ENCODE measurements at regions of chr14 and their contacts with region 1.

Region 1: GRCh38 chr14:21103710-21104447 is 3.0 kb downstream of the TMEM253 start:
- DNase-seq: peak; percentile 98
- H3K4me3 ChIP-seq: peak overlapping the region; percentile 64 to 89
- H3K27ac ChIP-seq: peak overlapping the region; percentile 97 to 98
- H3K4me1 ChIP-seq: peaks cover 31% of the 10 kb centered on the region
- H3K27me3 ChIP-seq: no peaks in the 10 kb centered on the region
- CTCF ChIP-seq: peak; percentile 69 to 89 (median 88)
- POLR2A ChIP-seq: peak; percentile 73

Region 2: DNA sequence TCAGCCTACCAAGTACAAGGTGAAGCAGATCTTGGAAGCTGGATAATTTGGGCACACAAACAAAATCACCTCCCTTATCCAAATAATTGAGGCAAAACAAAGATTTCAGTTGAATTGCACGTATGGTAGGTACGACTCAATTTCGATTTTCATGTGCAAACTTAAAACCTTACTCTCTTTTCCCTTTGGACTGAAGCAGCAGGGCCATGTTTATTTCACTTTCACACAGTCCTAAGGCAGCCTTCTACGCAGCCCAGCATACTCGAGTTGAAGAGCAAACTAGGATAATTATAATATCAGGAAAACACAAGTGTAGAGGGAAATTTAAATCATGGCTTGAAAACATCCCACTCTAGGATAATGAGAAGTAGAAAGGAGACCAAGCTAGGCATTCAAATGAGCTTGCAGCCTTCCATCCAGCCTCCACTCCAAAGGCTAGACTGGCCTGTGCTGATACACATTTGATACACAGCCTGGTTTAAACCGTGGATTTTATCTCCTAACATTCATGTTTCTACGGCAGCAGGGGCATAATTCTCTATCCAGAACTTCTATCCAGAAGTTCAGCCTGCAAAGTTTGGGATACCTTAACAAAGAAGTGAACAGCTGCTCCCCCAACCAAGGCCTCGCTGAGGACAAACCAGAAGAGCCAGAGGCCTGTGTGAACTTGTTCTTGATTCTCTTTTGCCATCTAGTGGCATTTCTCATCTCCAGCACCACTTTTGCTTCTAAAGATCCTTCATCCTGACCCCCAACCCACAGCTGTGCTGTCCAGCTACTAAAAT is 64.1 kb before region 1 on chr14:
- intact Hi-C with region 1: no loop called
- DNase-seq: peak; percentile 60
- H3K4me3 ChIP-seq: no peak overlapping the region
- H3K27ac ChIP-seq: peak overlapping the region; percentile 0 to 64
- H3K4me1 ChIP-seq: peaks cover 22% of the 10 kb centered on the region
- H3K27me3 ChIP-seq: no peaks in the 10 kb centered on the region
- CTCF ChIP-seq: peak; percentile 46 to 56 (median 55)
- POLR2A ChIP-seq: no peak

Region 3: DNA sequence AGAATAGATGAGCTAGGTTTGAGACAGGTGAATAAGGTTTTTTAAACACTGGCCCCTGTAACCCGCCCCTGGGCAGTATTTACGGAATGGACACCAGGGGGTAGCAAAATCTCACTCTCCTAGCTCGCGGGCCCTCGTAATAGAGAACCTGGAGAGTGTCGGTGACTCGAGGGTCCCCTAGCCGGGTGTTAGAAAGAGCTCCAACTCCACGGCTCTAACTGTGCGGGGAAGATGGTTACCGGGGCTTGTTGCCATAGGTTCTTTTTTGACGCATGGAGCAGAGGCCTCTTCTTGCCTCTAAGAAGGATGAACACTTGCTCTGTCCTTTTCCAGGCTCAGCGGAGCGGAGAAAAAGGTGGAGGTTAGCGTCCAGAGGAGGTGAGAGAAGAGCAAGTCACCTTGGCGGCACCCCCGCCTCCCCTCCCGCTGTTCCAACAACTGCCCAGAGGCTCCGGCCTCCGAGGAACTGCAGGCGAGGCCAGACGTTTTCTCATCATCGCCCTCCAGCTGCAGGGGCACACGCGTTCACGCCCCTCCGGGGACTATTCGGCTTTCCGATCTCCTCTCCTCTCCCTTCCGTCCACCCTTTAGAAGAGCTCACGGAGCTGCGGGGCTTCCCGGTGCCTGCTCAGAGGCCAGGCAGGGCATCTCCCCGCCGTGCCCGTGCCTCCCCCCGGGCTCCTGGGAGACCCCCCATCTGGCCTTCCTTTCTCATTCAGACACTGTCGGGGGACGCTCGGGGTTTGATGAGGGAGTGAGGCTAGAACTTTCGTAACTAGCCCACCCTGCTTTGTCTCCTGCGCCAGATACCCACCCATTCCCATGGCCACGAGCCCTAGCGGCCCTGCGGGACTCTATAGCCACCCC is 35.1 kb before region 1 on chr14:
- intact Hi-C with region 1: loop called (anchors 2 kb)
- DNase-seq: peak; percentile 68
- H3K4me3 ChIP-seq: peak overlapping the region; percentile 68 to 75
- H3K27ac ChIP-seq: peak overlapping the region; percentile 80 to 89
- H3K4me1 ChIP-seq: peaks cover 26% of the 10 kb centered on the region
- H3K27me3 ChIP-seq: no peaks in the 10 kb centered on the region
- CTCF ChIP-seq: peak; percentile 43 to 59 (median 56)
- POLR2A ChIP-seq: no peak

Measured in testis (tissue), 5 donors.